CD14-positive monocyte (primary cell): ENCODE measurements at regions of chr15 and their contacts with region 1.

Region 1: DNA sequence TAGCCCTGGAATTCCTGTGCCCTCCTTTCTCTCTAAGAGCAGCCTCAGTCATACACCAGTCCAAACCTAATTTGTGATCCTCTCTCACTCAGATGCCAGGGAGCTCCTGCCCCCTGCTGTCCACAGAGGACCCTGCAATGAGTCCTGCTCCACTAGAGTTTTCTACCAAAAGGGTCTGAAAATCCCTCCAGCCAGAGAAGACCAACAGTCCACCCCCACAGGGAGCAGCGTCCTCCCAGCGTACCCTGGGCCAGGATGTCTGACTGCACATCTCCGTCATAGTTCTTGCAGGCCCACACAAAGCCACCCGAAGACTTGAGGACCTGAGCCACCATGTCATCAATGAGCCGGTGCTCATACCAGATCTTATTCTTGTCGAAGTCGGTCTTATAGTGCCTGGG is 15.4 kb downstream of the IDH2 start:
- DNase-seq: peak; percentile 47 to 61 (median 59)
- H3K4me3 ChIP-seq: no peak overlapping the region
- H3K4me3 Mint-ChIP-seq: no peak overlapping the region
- H3K27ac ChIP-seq: no peak overlapping the region
- H3K27ac Mint-ChIP-seq: peak overlapping the region in 6 of 7 donors; percentile 17 to 76 (median 69)
- H3K4me1 ChIP-seq: peaks cover 9 to 25% of the 10 kb centered on the region in 2 donors
- H3K4me1 Mint-ChIP-seq: peaks cover 20% of the 10 kb centered on the region
- H3K27me3 ChIP-seq: no peaks in the 10 kb centered on the region
- H3K27me3 Mint-ChIP-seq: peaks cover 0 to 3% (median 2%) of the 10 kb centered on the region in 3 donors
- CTCF ChIP-seq: peak; percentile 87

Region 2: DNA sequence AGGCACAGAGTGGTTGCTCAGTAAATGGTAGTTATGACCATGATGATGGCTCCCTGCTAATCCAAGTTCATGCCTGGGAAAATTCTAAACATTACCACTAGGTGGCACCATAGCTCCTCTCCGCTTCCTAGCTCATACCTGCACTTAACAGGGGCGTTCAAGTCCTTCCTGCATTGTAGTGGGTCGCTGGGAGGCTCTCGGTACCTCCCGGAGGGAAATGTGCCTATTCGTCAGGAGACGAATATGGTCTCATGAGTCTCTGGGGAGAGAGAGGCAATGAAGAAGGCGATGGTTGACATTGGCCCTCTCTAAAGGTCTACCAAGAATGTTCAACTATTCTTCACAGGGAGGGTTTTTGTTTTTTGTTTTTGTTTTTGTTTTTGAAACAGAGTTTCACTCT is 346.7 kb before region 1 on chr15:
- intact Hi-C with region 1: loop called (anchors 2 to 5 kb)
- DNase-seq: peak; percentile 46 to 71 (median 64)
- H3K4me3 ChIP-seq: no peak overlapping the region
- H3K4me3 Mint-ChIP-seq: no peak overlapping the region
- H3K27ac ChIP-seq: no peak overlapping the region
- H3K27ac Mint-ChIP-seq: no peak overlapping the region
- H3K4me1 ChIP-seq: no peaks in the 10 kb centered on the region
- H3K4me1 Mint-ChIP-seq: peaks cover 2% of the 10 kb centered on the region
- H3K27me3 ChIP-seq: no peaks in the 10 kb centered on the region
- H3K27me3 Mint-ChIP-seq: peaks cover 2 to 4% (median 3%) of the 10 kb centered on the region in 3 donors
- CTCF ChIP-seq: peak; percentile 97

Region 3: DNA sequence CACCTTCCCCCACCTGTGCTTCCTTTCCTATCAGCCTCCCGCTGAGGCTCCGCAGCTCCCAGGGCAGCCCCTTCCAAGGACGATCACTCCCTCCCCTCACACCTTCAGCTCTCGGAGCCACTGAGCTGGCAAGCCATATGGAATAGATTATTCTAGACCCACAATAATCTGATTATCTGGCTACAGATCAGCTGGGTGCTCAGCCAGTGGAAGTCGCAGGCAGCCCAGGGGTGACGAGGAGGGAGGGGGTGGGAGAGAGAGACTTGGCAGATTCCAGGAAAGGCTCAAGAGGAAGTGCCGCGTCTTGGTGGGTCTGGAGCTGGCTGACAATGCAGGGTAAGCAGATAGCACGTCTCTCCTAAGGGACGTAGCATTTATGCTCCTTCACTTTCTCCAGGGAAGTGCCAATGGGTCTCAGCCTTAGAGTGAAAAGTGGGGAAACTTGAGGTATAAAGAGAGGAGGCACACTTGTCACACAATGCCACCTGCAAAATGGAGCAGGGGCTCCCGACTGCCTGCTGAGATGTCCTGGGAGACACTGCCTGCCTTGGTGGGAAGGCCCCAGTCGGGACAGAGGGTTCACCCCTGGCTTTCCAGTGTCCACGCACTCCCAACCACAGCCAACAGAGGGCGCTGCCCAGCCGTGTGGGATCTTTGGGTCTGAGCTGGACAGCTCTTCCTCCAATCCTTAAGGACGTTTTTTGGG is 326.4 kb before region 1 on chr15:
- intact Hi-C with region 1: loop called (anchors 2 to 5 kb)
- DNase-seq: peak; percentile 69 to 79 (median 76)
- H3K4me3 ChIP-seq: no peak overlapping the region
- H3K4me3 Mint-ChIP-seq: peak overlapping the region in 1 of 2 donors; percentile 11
- H3K27ac ChIP-seq: no peak overlapping the region
- H3K27ac Mint-ChIP-seq: peak overlapping the region in 2 of 7 donors; percentile 18 to 53
- H3K4me1 ChIP-seq: peaks cover 23 to 30% of the 10 kb centered on the region in 2 donors
- H3K4me1 Mint-ChIP-seq: peaks cover 20% of the 10 kb centered on the region
- H3K27me3 ChIP-seq: no peaks in the 10 kb centered on the region
- H3K27me3 Mint-ChIP-seq: peaks cover 0 to 7% (median 0%) of the 10 kb centered on the region in 3 donors
- CTCF ChIP-seq: peak; percentile 98

Region 4: DNA sequence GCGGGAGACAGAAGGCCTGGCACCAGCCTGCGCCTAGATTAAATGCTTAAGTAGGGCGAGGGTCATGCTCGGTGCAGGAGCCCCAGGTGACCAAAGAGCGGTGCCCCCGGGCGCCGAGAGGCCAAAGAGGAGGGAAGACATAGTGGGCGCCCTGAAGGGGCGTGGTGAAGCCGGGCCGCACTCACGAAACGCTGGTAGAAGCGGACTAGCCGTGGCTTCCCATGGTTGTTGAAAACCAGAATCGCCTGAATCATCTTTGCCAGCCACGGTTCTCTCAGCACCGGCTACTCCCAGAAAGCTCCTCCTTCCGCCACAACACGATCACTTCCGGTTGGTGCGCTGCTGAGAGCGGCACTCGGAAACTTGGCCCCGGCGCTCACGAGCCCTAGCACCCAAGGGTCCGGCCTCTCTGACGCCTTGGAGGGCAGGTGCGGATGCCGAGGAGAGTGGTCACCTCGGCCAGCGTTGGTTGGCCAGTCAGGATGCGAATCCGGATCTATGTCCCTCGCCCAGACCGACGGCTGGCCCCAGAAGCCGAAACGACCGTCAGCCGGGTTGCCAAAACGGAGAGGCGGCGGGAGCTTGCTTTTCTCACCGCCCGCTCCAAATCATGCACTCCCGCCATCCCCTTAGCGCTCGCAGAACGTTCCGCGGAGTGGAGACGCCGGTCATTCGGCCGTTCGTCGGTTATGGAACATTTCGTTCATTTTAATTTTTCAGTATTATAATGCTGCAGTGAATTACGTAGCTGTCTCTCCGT is 193.0 kb before region 1 on chr15 and contains the start of gene AP3S2:
- intact Hi-C with region 1: loop called in 1 of 2 experiments (anchors 5 kb)
- DNase-seq: peak; percentile 90 to 94 (median 92)
- H3K4me3 ChIP-seq: peak within 1 kb of the TSS; percentile 70 to 97 (median 75)
- H3K4me3 Mint-ChIP-seq: peak within 1 kb of the TSS; percentile 95 to 98
- H3K27ac ChIP-seq: peak within 1 kb of the TSS; percentile 94 to 99
- H3K27ac Mint-ChIP-seq: peak within 1 kb of the TSS; percentile 98 to 100 (median 99)
- H3K4me1 ChIP-seq: peaks cover 35 to 57% of the 10 kb centered on the region in 2 donors
- H3K4me1 Mint-ChIP-seq: peaks cover 48% of the 10 kb centered on the region
- H3K27me3 ChIP-seq: no peaks in the 10 kb centered on the region
- H3K27me3 Mint-ChIP-seq: peaks cover 0 to 3% (median 1%) of the 10 kb centered on the region in 3 donors
- CTCF ChIP-seq: no peak
- polyA plus RNA-seq, gene AP3S2: 30.8 to 41.2 (median 32.4) TPM